Esophagus muscularis mucosa (tissue), 4 donors: ENCODE measurements at regions of chr3 and their contacts with region 1.

Region 1: GRCh38 chr3:44510000-44510368 is 32.5 kb upstream of the ZNF445 start:
- DNase-seq: no peak
- H3K4me3 ChIP-seq: peak overlapping the region; percentile 72 to 93 (median 82)
- H3K27ac ChIP-seq: peak overlapping the region; percentile 86 to 95 (median 90)
- H3K4me1 ChIP-seq: peaks cover 14 to 46% (median 36%) of the 10 kb centered on the region in 4 donors
- H3K27me3 ChIP-seq: no peaks in the 10 kb centered on the region
- CTCF ChIP-seq: no peak
- EP300 ChIP-seq: no peak
- POLR2A ChIP-seq: no peak

Region 2: DNA sequence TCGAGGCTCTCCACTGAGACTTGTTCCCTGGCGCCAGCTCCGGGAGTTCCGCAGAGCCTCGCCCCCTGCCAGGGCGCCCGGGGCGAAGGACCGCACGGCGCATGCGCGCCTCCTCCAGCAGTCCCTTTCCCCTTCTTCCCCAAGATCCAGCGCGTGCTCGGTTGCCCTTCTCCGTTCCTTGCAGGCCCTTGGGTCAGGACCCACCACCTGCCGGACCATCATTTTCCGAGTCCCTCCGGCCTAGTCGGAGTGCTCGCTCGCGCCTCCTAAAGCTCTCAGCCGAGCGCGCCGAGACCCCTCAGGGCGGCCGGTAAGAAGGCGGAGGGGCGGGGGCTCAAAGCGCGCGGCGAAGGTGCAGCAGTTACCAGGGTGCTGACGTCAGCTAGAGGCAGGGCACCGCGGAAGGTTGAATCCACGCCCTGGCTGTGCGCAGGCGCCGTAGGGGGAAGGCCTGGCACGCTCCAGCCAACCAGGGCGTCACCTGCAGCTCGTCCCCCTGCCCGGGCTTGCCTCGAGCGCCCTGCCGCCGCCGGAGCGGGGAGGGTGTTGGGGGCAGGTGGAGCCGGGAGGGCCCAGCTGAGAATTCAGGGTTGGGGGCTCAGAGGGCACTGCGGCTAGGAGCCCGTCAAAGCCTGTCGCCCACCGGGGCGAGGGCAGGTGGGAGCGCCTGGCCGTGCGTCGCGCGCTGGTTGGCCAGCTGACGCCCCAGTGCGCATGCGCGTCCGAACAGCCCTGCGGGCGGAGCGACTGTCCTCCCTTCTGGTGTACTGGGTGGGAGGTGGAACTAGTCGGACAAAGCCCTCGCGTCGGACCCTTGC is 171.8 kb before region 1 on chr3 and contains the start of gene TCAIM:
- intact Hi-C with region 1: loop called (anchors 5 kb)
- DNase-seq: peak; percentile 99
- H3K4me3 ChIP-seq: peak within 1 kb of the TSS; percentile 69 to 86 (median 82)
- H3K27ac ChIP-seq: peak within 1 kb of the TSS; percentile 94 to 99 (median 96)
- H3K4me1 ChIP-seq: peaks cover 33 to 48% (median 47%) of the 10 kb centered on the region in 4 donors
- H3K27me3 ChIP-seq: no peaks in the 10 kb centered on the region
- CTCF ChIP-seq: peak in 1 of 3 experiments; percentile 6
- EP300 ChIP-seq: no peak
- POLR2A ChIP-seq: peak; percentile 79
- total RNA-seq, gene TCAIM: 32.0 to 46.4 (median 36.5) TPM

Region 3: GRCh38 chr3:44400771-44401170 is 109.2 kb before region 1 on chr3:
- intact Hi-C with region 1: no loop called
- DNase-seq: no peak
- H3K4me3 ChIP-seq: no peak overlapping the region
- H3K27ac ChIP-seq: no peak overlapping the region
- H3K4me1 ChIP-seq: no peaks in the 10 kb centered on the region
- H3K27me3 ChIP-seq: no peaks in the 10 kb centered on the region
- CTCF ChIP-seq: no peak
- EP300 ChIP-seq: no peak
- POLR2A ChIP-seq: no peak

Region 4: GRCh38 chr3:44477312-44478030 is 32.5 kb before region 1 on chr3 and contains the start of gene ZNF445:
- intact Hi-C with region 1: loop called (anchors 2 kb)
- DNase-seq: peak; percentile 93
- H3K4me3 ChIP-seq: peak within 1 kb of the TSS; percentile 75 to 88 (median 82)
- H3K27ac ChIP-seq: peak within 1 kb of the TSS; percentile 74 to 87 (median 82)
- H3K4me1 ChIP-seq: peaks cover 14 to 38% (median 30%) of the 10 kb centered on the region in 4 donors
- H3K27me3 ChIP-seq: no peaks in the 10 kb centered on the region
- CTCF ChIP-seq: no peak
- EP300 ChIP-seq: no peak
- POLR2A ChIP-seq: no peak
- total RNA-seq, gene ZNF445: 6.5 to 11.9 (median 10.1) TPM

Region 5: GRCh38 chr3:45021148-45021923 is 511.4 kb after region 1 on chr3:
- intact Hi-C with region 1: no loop called
- DNase-seq: no peak
- H3K4me3 ChIP-seq: no peak overlapping the region
- H3K27ac ChIP-seq: peak overlapping the region in 1 of 4 donors; percentile 31
- H3K4me1 ChIP-seq: peaks cover 35 to 50% (median 39%) of the 10 kb centered on the region in 4 donors
- H3K27me3 ChIP-seq: no peaks in the 10 kb centered on the region
- CTCF ChIP-seq: no peak
- EP300 ChIP-seq: no peak
- POLR2A ChIP-seq: no peak